Lower leg skin (tissue), 4 donors: ENCODE measurements at regions of chr1 and their contacts with region 1.

Region 1: GRCh38 chr1:26771643-26772321 is 16.0 kb upstream of the PIGV start:
- DNase-seq: no peak
- H3K4me3 ChIP-seq: no peak overlapping the region
- CTCF ChIP-seq: no peak
- POLR2A ChIP-seq: no peak

Region 2: DNA sequence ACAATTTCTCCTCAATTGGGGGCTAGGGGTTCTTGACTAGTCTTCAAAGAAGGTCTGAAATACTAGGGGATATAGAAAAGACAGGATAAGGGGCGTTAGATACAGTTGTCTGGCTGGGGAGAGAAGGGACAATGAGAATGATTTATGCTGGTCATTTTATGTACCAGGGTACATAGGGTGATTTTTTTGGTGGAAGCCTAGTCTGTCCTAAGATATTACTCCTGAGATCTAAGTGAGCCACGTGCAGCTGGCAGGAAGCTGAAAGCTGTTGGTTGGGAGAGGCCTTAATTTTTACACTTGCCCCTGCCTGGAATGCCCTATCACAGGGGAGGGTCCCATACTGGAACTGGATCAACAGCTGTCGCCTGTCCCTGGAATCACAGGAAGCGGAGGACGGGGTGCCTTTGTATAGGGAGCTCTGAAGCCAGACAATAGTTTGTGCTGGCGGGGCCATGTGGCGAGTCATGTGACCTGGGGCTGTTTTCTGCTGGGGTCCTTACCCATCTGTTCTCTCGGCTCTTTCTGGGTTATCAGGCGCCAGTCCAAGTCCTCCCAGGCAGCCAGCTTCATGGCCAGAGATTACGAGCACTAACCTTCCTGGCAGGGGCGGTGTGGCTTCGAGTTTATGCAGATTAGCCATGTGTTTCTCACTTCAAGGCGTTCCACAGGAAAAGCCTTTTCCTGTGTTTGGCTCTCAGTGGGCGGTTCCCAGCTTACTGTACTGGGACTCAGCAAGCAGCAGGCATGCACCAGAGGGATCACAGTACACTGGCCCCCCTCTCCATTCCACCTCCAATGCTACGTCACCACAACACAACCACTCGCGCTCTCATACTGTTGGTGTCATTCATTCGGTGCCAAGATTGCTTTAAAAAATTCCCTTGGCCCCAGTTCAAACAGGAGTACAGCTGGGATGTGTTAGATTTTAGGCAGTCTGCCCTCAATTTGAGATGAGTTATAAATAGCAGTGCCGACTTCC is 48.5 kb before region 1 on chr1:
- intact Hi-C with region 1: loop called (anchors 10 kb)
- DNase-seq: peak; percentile 77 to 92
- H3K4me3 ChIP-seq: no peak overlapping the region
- CTCF ChIP-seq: no peak
- POLR2A ChIP-seq: no peak